ENCODE measurements at regions of chr18 and their contacts with region 1.

Region 1: DNA sequence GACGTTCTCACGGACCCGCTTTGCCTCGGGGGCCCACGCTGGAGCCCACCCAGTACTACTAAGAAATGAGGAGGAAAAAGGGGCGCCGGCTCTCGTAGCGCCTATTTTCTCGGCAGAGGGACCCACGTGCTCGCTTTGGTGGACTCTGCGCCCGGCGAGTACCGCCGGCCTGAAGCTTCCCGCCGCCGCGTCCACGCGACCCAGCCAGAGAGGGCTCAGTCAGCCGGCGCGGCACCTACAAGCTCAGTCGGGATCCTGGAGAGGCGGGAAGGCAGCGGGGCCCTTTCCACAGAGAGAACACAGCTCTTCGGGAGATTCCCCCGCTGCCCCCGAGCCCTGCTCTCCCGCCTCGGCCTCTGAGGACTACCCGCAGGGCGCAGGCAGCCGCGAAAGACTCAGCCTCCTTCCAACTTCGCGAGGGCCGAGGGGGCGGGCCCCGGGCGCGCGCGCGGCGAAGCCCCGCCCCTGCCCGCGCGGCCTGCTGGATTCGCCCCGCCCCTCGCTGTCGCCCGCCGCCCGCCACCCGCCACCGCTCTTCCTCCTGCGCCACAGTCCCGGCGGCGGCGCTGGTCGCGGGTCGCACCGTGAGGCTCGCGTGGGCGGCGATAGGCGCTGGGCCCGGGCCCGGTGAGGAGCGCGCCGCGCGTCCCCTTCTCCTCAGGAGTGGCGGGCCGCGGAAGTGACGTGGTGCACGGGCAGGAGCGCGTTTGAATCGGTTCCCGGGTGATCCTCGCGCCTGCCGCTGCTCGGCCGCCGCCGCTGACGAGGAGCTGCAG is at the start of gene SMCHD1:
- DNase-seq: no peak
- ATAC-seq: peak; percentile 89
- H3K4me3 ChIP-seq: peak within 1 kb of the TSS; percentile 87 to 94
- H3K27ac ChIP-seq: peak within 1 kb of the TSS; percentile 89
- H3K4me1 ChIP-seq: peaks cover 21% of the 10 kb centered on the region
- H3K27me3 ChIP-seq: no peaks in the 10 kb centered on the region
- CTCF ChIP-seq: no peak
- total RNA-seq, gene SMCHD1: 40.9 TPM

Region 2: GRCh38 chr18:2706903-2707302 is 51.5 kb after region 1 on chr18:
- CTCF ChIA-PET with region 1: no interaction called
- POLR2A ChIA-PET with region 1: interaction called, 19 read pairs
- in situ Hi-C with region 1: no loop called
- intact Hi-C with region 1: no loop called
- DNase-seq: no peak
- ATAC-seq: no peak
- H3K4me3 ChIP-seq: no peak overlapping the region
- H3K27ac ChIP-seq: no peak overlapping the region
- H3K4me1 ChIP-seq: no peaks in the 10 kb centered on the region
- H3K27me3 ChIP-seq: no peaks in the 10 kb centered on the region
- CTCF ChIP-seq: no peak

Region 3: GRCh38 chr18:2932247-2933181 is 277.1 kb after region 1 on chr18:
- CTCF ChIA-PET with region 1: no interaction called
- POLR2A ChIA-PET with region 1: no interaction called
- in situ Hi-C with region 1: no loop called
- intact Hi-C with region 1: no loop called
- DNase-seq: peak; percentile 13
- ATAC-seq: peak; percentile 75
- H3K4me3 ChIP-seq: no peak overlapping the region
- H3K27ac ChIP-seq: peak overlapping the region; percentile 58
- H3K4me1 ChIP-seq: 0 out of 2 replicates have a peak, but pooled peaks cover 3% of the 10 kb centered on the region
- H3K27me3 ChIP-seq: no peaks in the 10 kb centered on the region
- CTCF ChIP-seq: peak; percentile 74